Esophagus muscularis mucosa (tissue), 4 donors: ENCODE measurements at regions of chr7 and their contacts with region 1.

Region 1: GRCh38 chr7:74665296-74665938 is 7.9 kb downstream of the GTF2I start:
- DNase-seq: no peak
- H3K4me3 ChIP-seq: no peak overlapping the region
- H3K27ac ChIP-seq: peak overlapping the region in 2 of 4 donors; percentile 2 to 99
- H3K4me1 ChIP-seq: peaks cover 37 to 89% (median 70%) of the 10 kb centered on the region in 4 donors
- H3K27me3 ChIP-seq: no peaks in the 10 kb centered on the region
- CTCF ChIP-seq: no peak
- EP300 ChIP-seq: no peak
- POLR2A ChIP-seq: no peak

Region 2: DNA sequence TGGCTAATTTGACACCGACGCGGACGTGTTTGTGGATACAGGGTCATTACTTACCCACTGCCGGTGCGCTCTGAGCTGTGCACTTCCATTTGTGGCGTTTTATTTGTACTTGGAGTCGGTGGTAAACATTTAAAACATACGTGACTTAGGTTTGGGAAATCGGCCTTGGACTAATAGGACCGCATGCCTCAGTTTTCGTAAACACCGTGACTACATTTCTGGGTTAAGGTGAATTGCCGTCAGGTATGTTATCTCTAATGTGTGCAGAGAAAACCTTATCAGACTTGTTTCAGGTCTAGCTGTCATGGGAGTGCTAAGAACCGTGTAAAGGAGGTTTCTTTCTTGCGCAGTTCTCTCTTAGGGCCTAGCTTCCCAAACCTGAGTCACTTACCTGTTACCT is 56.7 kb after region 1 on chr7:
- intact Hi-C with region 1: loop called (anchors 10 kb)
- DNase-seq: no peak
- H3K4me3 ChIP-seq: no peak overlapping the region
- H3K27ac ChIP-seq: no peak overlapping the region
- H3K4me1 ChIP-seq: peaks cover 4 to 27% (median 11%) of the 10 kb centered on the region in 4 donors
- H3K27me3 ChIP-seq: no peaks in the 10 kb centered on the region
- CTCF ChIP-seq: no peak
- EP300 ChIP-seq: no peak
- POLR2A ChIP-seq: no peak